ENCODE measurements at regions of chr10 and their contacts with region 1.

Region 1: DNA sequence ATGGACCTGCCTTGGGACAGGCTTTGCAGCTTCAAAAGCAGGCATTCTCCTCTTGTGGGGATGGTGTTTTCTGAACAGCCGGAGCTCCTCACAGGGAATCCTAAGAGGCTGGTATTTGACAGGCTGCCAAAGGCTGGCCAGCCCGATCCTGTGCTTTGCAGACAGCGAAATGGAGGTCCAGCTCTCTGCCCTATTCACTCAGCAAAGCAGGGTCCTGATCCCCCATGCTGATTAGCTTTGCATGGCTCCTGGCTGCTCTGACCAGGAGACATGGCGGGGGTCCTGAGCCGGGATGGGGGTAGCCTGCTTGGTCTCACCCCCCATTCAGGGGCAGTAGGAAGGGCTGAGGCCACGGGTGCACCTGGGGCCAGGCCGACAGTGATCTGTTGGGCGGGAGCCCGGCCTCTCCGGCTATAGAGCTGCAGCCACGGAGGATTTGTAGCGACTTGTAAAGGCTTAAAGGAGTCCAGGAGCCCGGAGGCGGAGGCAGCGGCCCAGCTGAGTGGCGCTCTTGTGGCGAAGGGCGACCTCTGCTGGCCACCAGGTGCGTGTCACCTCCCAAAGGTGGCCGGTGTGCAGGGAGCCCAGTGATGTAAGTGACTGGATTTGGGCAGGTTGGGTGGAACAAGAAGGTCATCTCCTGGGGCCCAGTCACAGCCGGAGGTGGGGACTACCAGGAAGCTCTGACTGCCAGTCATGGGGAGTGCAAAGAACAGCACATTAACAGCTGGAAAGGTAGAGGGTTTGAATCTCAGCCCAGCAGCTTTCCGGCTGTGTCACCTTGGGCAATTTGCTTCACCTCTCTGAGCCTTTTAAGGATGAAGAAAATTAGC is 126.5 kb downstream of the ZMIZ1 start:
- DNase-seq: peak; percentile 85
- H3K4me3 ChIP-seq: peak overlapping the region in 1 of 2 experiments; percentile 24; a peak in 1 of 4 replicates
- H3K27ac ChIP-seq: peak overlapping the region; percentile 70 to 93
- H3K4me1 ChIP-seq: peaks cover 25 to 72% of the 10 kb centered on the region in 2 experiments
- H3K27me3 ChIP-seq: no peaks in the 10 kb centered on the region
- CTCF ChIP-seq: peak; percentile 93
- EP300 ChIP-seq: no peak
- RAD21 ChIP-seq: peak; percentile 95

Region 2: DNA sequence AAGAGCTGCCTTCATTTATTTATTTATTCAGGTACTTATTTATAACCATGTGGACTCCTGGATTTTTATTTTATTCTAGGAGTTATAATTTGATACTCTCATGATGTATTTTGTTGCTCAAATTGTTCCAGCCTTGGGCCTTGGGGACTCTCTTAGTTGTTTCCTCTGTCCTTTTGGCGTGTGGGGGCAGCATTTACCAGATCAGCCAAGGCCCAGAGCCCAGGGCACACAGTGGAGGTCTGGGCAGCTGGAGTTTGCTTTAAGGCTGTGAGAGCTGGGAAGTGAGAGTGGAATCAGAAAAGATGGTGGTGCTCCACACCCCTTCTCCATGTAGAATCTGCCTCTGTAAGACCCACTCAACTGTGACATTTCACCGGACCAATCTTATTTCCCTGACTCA is 762.7 kb before region 1 on chr10:
- CTCF ChIA-PET with region 1: interaction called, 11 read pairs
- POLR2A ChIA-PET with region 1: no interaction called
- DNase-seq: no peak
- H3K4me3 ChIP-seq: no peak overlapping the region
- H3K27ac ChIP-seq: peak overlapping the region in 1 of 2 experiments; percentile 99; a peak in 2 of 4 replicates
- H3K4me1 ChIP-seq: peaks cover 0 to 54% of the 10 kb centered on the region in 2 experiments; a peak in 2 of 4 replicates
- H3K27me3 ChIP-seq: no peaks in the 10 kb centered on the region
- CTCF ChIP-seq: no peak; the same call in 1 of the 2 replicates
- EP300 ChIP-seq: no peak
- RAD21 ChIP-seq: peak; percentile 63

Region 3: DNA sequence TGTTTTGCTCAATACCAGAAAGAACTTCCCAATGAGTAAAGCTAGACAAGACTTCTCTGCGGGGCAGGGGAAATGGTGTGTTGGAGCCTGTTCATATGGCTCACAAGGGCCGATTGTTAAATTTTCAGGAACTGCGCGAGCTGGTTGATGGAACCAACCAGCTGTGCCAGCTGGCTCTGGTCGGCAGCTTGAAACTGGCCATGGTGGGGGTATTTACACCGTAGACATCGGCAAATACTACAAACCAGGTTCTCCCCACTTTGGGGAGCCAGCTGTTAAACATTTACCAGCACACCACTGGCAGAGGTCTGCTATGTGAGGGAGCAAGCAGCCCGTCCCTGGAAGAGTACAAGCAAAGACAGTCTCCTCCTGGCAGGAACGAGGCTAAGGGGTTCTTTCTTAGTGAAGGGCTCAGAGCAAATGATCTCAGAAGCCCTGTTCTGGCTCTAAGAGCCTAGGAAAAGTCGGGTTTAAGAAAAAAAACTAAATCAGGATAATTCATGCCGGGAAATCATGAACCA is 135.4 kb before region 1 on chr10:
- CTCF ChIA-PET with region 1: interaction called, 129 read pairs
- POLR2A ChIA-PET with region 1: no interaction called
- DNase-seq: no peak
- H3K4me3 ChIP-seq: no peak overlapping the region
- H3K27ac ChIP-seq: no peak overlapping the region
- H3K4me1 ChIP-seq: peaks cover 0 to 12% of the 10 kb centered on the region in 2 experiments; a peak in 1 of 4 replicates
- H3K27me3 ChIP-seq: no peaks in the 10 kb centered on the region
- CTCF ChIP-seq: no peak
- EP300 ChIP-seq: no peak
- RAD21 ChIP-seq: no peak

Region 4: DNA sequence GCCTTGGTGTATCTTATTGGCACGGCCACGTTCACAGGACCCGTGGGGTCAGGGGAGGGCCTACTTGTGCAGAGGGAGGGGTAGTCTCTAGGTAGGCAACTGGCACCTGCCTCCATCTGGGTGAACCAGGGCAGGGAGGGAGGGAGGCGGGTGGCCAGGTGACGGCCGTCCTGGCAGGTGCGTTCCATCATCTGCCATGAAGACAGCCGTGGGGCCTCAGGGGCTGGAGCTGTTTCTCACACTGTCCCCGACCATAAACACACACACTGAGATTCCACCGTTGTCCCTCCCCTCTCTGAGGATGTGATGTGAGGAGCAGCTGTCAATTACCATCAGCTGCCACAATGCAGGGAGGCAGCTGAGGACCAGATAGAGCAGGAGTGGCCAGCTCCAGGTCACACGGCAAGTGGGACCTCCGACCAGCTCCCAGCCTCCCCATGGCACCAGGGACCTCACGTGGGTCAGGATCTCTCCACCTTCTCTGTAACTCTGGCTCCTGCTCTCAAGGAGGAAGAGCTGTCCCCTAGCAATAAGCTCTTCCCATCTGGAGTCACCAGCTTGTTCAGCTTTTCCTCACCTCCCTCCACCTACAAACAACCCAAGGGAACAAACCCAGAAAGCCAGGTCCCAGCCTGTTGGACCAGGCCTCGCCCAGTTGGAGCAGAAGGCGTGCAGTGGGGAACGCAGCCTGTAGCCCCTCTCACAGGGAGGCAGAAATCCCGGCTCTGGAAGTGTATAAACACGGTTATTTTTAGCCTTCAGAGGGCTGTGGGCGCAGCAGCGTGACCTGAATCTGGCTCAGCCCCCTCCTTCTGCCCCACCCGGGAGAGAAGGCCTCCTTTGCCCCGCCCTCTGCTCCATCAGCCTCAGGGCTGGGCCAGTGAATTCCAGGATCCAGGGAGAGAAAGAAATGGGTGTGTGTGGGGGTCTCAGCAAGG is 93.5 kb before region 1 on chr10:
- CTCF ChIA-PET with region 1: interaction called, 22 read pairs
- POLR2A ChIA-PET with region 1: no interaction called
- DNase-seq: peak; percentile 57
- H3K4me3 ChIP-seq: no peak overlapping the region
- H3K27ac ChIP-seq: peak overlapping the region; percentile 15 to 56; a peak in 3 of 4 replicates
- H3K4me1 ChIP-seq: peaks cover 11 to 96% of the 10 kb centered on the region in 2 experiments; a peak in 2 of 4 replicates
- H3K27me3 ChIP-seq: no peaks in the 10 kb centered on the region
- CTCF ChIP-seq: no peak
- EP300 ChIP-seq: no peak
- RAD21 ChIP-seq: no peak

Region 5: GRCh38 chr10:79139124-79139835 is 56.0 kb before region 1 on chr10:
- CTCF ChIA-PET with region 1: interaction called, 30 read pairs
- POLR2A ChIA-PET with region 1: no interaction called
- DNase-seq: no peak
- H3K4me3 ChIP-seq: no peak overlapping the region
- H3K27ac ChIP-seq: peak overlapping the region; percentile 2 to 58; a peak in 3 of 4 replicates
- H3K4me1 ChIP-seq: peaks cover 27 to 58% of the 10 kb centered on the region in 2 experiments; a peak in 3 of 4 replicates
- H3K27me3 ChIP-seq: no peaks in the 10 kb centered on the region
- CTCF ChIP-seq: no peak
- EP300 ChIP-seq: no peak
- RAD21 ChIP-seq: no peak

Region 6: DNA sequence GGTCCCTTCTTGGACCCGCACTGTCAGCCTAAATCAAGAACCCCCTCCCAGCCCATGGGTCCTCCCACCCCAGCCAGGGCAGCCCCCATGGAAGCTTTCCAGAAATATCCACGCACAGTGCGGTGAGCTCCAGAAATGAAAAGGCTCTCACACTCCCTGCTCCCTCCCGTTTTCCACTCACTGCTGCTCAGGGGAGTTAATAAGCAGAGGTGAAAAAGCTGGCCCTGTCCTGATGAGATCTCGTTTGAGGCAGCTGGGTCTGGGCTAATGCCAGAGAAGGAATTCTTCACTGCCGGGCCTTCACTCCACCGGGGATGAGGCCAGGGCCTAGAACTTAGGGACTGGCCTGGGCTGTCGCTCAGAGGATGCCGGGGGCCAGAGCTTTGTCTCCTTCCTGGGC is 24.3 kb before region 1 on chr10:
- CTCF ChIA-PET with region 1: interaction called, 136 read pairs
- POLR2A ChIA-PET with region 1: no interaction called
- DNase-seq: no peak
- H3K4me3 ChIP-seq: no peak overlapping the region
- H3K27ac ChIP-seq: peak overlapping the region in 1 of 2 experiments; percentile 40; a peak in 1 of 4 replicates
- H3K4me1 ChIP-seq: peaks cover 5 to 90% of the 10 kb centered on the region in 2 experiments; a peak in 3 of 4 replicates
- H3K27me3 ChIP-seq: no peaks in the 10 kb centered on the region
- CTCF ChIP-seq: no peak
- EP300 ChIP-seq: no peak
- RAD21 ChIP-seq: no peak

Region 7: DNA sequence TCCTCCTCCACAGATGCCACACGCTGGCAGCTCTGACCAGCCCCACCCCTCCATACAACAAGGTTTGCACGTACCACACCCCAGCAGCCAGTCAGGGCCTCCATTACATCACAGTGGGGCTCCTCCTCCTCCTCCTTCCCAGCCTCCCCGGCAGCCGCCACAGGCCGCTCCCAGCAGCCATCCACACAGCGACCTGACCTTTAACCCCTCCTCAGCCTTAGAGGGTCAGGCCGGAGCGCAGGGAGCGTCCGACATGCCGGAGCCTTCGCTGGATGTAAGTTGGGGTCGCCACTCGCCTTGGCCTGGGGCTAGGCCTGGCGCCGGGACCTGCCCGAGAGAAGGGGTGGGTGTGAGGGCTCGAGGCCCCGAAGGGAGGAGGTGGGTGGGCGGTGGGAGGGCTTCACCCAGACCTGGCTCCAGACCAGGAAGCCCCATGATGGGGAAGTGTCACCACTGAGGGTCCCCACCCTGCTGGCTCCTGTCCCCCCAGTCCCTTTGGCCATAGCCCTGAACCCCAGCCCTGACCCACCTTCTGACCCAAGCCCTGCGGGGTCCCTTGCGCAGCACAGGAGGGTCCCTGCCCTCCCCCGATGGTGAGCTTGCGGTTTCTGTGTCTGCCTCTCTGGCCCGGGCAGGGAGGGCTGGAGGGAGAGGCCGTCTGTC is 115.7 kb after region 1 on chr10:
- CTCF ChIA-PET with region 1: no interaction called
- POLR2A ChIA-PET with region 1: no interaction called
- DNase-seq: peak; percentile 42
- H3K4me3 ChIP-seq: no peak overlapping the region
- H3K27ac ChIP-seq: peak overlapping the region in 1 of 2 experiments; percentile 44; a peak in 1 of 4 replicates
- H3K4me1 ChIP-seq: peaks cover 0 to 57% of the 10 kb centered on the region in 2 experiments; a peak in 1 of 4 replicates
- H3K27me3 ChIP-seq: no peaks in the 10 kb centered on the region
- CTCF ChIP-seq: no peak
- EP300 ChIP-seq: no peak
- RAD21 ChIP-seq: no peak